ENCODE measurements at regions of chr14 and their contacts with region 1.

Region 1: DNA sequence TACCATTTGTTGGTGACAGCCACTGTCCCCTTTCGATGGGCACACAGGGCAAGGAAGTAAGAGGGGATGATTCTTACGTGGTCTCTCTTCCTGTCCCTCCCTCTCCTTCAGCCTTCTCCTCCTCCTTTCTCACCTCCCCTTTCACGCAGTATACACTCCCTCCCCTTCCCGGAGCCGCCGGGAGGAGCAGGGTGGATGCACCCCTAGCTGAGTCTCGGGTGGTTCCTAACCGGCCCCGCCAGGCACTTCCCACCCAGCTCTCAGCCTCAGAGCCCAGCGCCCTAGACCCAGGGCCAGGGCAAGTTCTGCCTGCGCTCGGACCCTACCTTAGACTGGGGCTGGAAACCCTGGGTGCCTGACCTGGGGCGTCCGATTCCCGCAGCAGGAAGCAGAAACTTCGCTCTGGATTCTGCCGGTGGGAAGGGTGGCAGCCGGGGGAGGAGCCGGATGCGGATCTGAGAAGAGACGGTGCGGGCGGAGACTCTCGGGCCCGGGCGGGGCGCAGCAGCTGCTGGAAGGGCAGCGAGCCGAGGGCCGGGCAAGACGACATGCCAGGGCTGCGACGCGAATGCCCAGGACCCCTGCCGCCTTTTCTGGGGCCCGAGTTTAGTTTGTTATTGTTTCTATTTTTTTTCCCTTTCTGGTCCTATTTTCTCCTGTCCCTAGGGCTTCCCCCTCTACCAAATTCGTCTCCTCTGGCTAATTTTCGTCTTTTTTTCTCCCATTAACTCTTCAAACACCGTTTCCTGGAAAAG is at the start of gene TEP1:
- DNase-seq: peak; percentile 69
- H3K4me3 Mint-ChIP-seq: peak within 1 kb of the TSS; percentile 100
- H3K27ac Mint-ChIP-seq: peak within 1 kb of the TSS; percentile 99
- H3K4me1 Mint-ChIP-seq: peaks cover 40% of the 10 kb centered on the region
- H3K27me3 Mint-ChIP-seq: no peaks in the 10 kb centered on the region
- total RNA-seq, gene TEP1: 39.3 and 41.9 TPM in 2 replicates

Region 2: DNA sequence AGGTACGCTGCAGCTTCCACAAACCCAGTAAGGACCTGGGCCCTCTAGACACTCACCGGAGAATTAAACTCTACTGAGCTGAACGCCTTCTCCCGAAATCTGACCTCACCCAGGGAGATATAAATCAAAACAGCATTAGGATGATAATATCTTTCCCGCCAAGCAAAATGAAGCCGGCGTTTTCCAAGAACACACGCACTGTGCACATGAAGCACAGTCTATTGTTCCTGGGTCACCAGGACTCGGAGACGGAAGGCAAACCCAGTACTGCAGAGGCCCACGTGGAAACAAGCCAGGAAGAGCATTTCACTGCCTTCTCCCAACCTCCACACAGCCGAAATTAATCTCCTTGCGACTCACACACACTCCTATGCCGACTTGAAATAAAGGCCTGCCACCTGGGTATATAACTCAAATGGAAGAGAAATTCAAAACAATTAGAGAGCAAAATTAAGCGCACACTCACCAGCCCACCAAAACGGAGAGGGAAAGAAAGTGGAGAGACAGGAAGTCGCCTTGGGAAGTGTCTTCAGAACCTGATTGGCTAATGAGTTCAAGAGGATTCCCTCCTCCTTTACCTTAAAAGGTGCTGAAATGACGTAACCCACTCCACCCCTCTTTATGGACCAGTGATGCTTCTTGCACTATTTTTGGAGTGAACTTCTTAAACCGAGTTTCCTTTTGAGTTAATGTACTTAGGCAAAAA is 80.3 kb before region 1 on chr14 and contains the start of gene CCNB1IP1:
- intact Hi-C with region 1: loop called (anchors 2 kb)
- DNase-seq: peak; percentile 62
- H3K4me3 Mint-ChIP-seq: peak within 1 kb of the TSS; percentile 98
- H3K27ac Mint-ChIP-seq: peak within 1 kb of the TSS; percentile 91
- H3K4me1 Mint-ChIP-seq: peaks cover 59% of the 10 kb centered on the region
- H3K27me3 Mint-ChIP-seq: peaks cover 5% of the 10 kb centered on the region
- total RNA-seq, gene CCNB1IP1: 61.2 and 72.5 TPM in 2 replicates

Region 3: DNA sequence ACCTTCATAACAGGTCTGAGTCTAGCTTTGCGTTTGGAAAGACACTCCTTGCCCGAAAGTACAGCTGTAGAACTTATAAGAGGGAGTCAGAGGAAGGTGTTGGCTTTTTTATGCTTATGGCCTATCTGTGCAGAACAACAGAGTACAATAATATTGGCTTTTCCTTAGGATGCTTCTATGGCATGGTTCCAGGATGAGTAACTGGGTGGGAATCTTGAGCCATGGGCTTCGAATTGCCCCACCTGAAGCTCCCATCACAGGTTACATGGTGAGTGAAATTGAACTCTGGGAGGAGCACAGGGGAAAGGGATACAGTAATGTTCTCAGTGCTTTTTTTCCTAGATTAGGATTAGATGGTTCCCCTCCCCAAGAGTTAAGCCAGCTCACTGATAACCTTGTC is 56.8 kb before region 1 on chr14:
- intact Hi-C with region 1: no loop called
- DNase-seq: no peak
- H3K4me3 Mint-ChIP-seq: no peak overlapping the region
- H3K27ac Mint-ChIP-seq: no peak overlapping the region
- H3K4me1 Mint-ChIP-seq: no peaks in the 10 kb centered on the region
- H3K27me3 Mint-ChIP-seq: no peaks in the 10 kb centered on the region

Region 4: GRCh38 chr14:20400965-20401593 is 12.1 kb before region 1 on chr14:
- intact Hi-C with region 1: loop called (anchors 1 kb)
- DNase-seq: no peak
- H3K4me3 Mint-ChIP-seq: peak overlapping the region; percentile 53
- H3K27ac Mint-ChIP-seq: peak overlapping the region; percentile 86
- H3K4me1 Mint-ChIP-seq: peaks cover 30% of the 10 kb centered on the region
- H3K27me3 Mint-ChIP-seq: no peaks in the 10 kb centered on the region

Region 5: GRCh38 chr14:20454516-20455354 is 41.5 kb after region 1 on chr14 and contains the starts of genes APEX1 and OSGEP:
- intact Hi-C with region 1: loop called (anchors 1 kb)
- DNase-seq: peak; percentile 97
- H3K4me3 Mint-ChIP-seq: peak within 1 kb of the TSS; percentile 53
- H3K27ac Mint-ChIP-seq: no peak within 1 kb of the TSS
- H3K4me1 Mint-ChIP-seq: peaks cover 11% of the 10 kb centered on the region
- H3K27me3 Mint-ChIP-seq: no peaks in the 10 kb centered on the region
- total RNA-seq, gene APEX1: 236 and 242 TPM in 2 replicates
- total RNA-seq, gene OSGEP: 69.6 and 77.4 TPM in 2 replicates

Region 6: GRCh38 chr14:20469242-20469889 is 56.1 kb after region 1 on chr14 and contains the start of gene PNP:
- intact Hi-C with region 1: loop called (anchors 1 kb)
- DNase-seq: peak; percentile 85
- H3K4me3 Mint-ChIP-seq: peak within 1 kb of the TSS; percentile 95
- H3K27ac Mint-ChIP-seq: peak within 1 kb of the TSS; percentile 96
- H3K4me1 Mint-ChIP-seq: peaks cover 40% of the 10 kb centered on the region
- H3K27me3 Mint-ChIP-seq: peaks cover 3% of the 10 kb centered on the region
- total RNA-seq, gene PNP: 149 TPM in 2 replicates

Measured in activated T-helper 1 cell treated with anti-CD3 and anti-CD28 coated beads, Interleukin-12 subunit alpha, Interleukin-12 subunit beta, Interleukin-2, Interleukin-4 antibody, amounts not matched to agents 30 ng/mL and 10 ng/mL and 1 ng/mL, durations not matched to agents 14 hours and 24 hours and 36 hours (primary cell).